ENCODE measurements at regions of chr20 and their contacts with region 1.

Region 1: DNA sequence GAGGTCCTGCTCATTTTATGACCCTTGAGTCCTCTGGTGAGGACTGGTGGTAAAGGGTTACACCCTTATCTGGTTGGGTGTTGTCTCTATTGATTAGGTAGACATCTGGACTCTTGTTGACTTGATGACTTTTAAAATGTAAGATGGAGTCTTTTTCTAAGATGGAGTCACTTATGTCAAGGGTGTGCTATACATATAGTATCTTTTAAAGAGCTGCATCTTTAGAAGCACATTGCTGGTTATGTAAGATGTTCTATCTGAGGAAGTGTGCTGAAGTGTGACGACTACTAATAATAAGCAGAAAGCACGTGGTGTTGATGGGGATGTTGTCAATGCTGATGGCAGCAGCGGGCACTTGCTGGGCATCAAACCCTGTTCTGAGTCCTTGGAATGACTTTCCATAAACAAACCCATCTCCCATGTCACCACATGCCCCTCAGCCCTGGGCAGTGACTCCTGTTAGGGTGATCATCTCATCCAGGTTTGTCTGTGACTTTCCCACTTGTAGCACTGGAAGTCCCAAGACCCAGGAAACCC is 229.6 kb downstream of the EYA2 start:
- DNase-seq: no peak
- ATAC-seq: peak; percentile 17; the same call in 1 of the 2 replicates
- H3K4me3 ChIP-seq: no peak overlapping the region
- H3K27ac ChIP-seq: peak overlapping the region; percentile 34
- H3K4me1 ChIP-seq: peaks cover 17% of the 10 kb centered on the region
- H3K27me3 ChIP-seq: no peaks in the 10 kb centered on the region
- CTCF ChIP-seq: no peak

Region 2: GRCh38 chr20:47606983-47607613 is 482.8 kb after region 1 on chr20:
- CTCF ChIA-PET with region 1: no interaction called
- POLR2A ChIA-PET with region 1: interaction called, 18 read pairs
- intact Hi-C with region 1: no loop called
- DNase-seq: peak; percentile 46
- ATAC-seq: peak; percentile 56
- H3K4me3 ChIP-seq: no peak overlapping the region
- H3K27ac ChIP-seq: no peak overlapping the region
- H3K4me1 ChIP-seq: peaks cover 27% of the 10 kb centered on the region
- H3K27me3 ChIP-seq: no peaks in the 10 kb centered on the region
- CTCF ChIP-seq: no peak

Region 3: GRCh38 chr20:47741669-47742608 is 617.7 kb after region 1 on chr20:
- CTCF ChIA-PET with region 1: no interaction called
- POLR2A ChIA-PET with region 1: interaction called, 14 read pairs
- intact Hi-C with region 1: no loop called
- DNase-seq: no peak
- ATAC-seq: no peak
- H3K4me3 ChIP-seq: no peak overlapping the region
- H3K27ac ChIP-seq: no peak overlapping the region
- H3K4me1 ChIP-seq: no peaks in the 10 kb centered on the region
- H3K27me3 ChIP-seq: no peaks in the 10 kb centered on the region
- CTCF ChIP-seq: no peak

Region 4: GRCh38 chr20:47985092-47985850 is 861.0 kb after region 1 on chr20:
- CTCF ChIA-PET with region 1: no interaction called
- POLR2A ChIA-PET with region 1: no interaction called
- intact Hi-C with region 1: no loop called
- DNase-seq: peak; percentile 77
- ATAC-seq: peak; percentile 60
- H3K4me3 ChIP-seq: no peak overlapping the region
- H3K27ac ChIP-seq: peak overlapping the region; percentile 42
- H3K4me1 ChIP-seq: peaks cover 27% of the 10 kb centered on the region
- H3K27me3 ChIP-seq: no peaks in the 10 kb centered on the region
- CTCF ChIP-seq: no peak